ENCODE measurements at regions of chr2 and their contacts with region 1.

Region 1: DNA sequence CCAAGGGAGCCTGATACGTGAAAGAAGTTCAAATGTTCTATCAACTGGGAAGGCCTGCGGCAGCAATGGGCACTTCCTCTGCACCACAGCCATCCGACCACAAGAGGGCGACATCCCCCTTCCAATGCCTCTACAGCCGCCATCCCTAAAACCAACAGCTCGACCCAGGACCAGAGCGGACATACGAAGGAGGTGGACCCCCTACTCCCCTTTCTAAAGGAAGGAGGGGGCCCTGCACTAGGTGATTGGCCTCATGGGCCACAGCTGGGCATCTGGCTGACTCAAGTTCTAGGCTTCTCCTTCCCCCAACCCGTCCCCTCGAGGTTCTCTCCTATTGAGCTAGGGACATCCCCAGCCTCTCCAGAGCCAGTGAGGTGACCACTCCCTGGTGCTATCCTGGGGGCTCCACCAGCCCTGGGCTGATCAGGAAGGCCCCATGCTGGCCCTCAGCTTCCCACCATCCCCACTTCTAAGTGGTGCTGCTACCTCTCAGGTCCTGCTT is 217.2 kb downstream of the TNS1 start:
- DNase-seq: peak; percentile 73 to 90 (median 89)
- H3K4me3 ChIP-seq: no peak overlapping the region
- H3K27ac ChIP-seq: no peak overlapping the region
- H3K4me1 ChIP-seq: peaks cover 1% of the 10 kb centered on the region
- H3K27me3 ChIP-seq: no peaks in the 10 kb centered on the region
- CTCF ChIP-seq: peak; percentile 90 to 95 (median 94)
- EP300 ChIP-seq: no peak
- POLR2A ChIP-seq: peak; percentile 31

Region 2: GRCh38 chr2:217478831-217479455 is 306.7 kb before region 1 on chr2:
- intact Hi-C with region 1: no loop called
- DNase-seq: no peak
- H3K4me3 ChIP-seq: no peak overlapping the region
- H3K27ac ChIP-seq: no peak overlapping the region
- H3K4me1 ChIP-seq: peaks cover 3% of the 10 kb centered on the region
- H3K27me3 ChIP-seq: no peaks in the 10 kb centered on the region
- CTCF ChIP-seq: no peak
- EP300 ChIP-seq: no peak
- POLR2A ChIP-seq: no peak

Region 3: GRCh38 chr2:217662984-217663602 is 122.5 kb before region 1 on chr2:
- intact Hi-C with region 1: no loop called
- DNase-seq: no peak
- H3K4me3 ChIP-seq: no peak overlapping the region
- H3K27ac ChIP-seq: no peak overlapping the region
- H3K4me1 ChIP-seq: peaks cover 2% of the 10 kb centered on the region
- H3K27me3 ChIP-seq: no peaks in the 10 kb centered on the region
- CTCF ChIP-seq: no peak
- EP300 ChIP-seq: no peak
- POLR2A ChIP-seq: no peak

Region 4: GRCh38 chr2:217886720-217887309 is 101.2 kb after region 1 on chr2:
- intact Hi-C with region 1: loop called in 3 of 4 experiments (anchors 5 kb)
- DNase-seq: peak; percentile 68 to 84 (median 81)
- H3K4me3 ChIP-seq: no peak overlapping the region
- H3K27ac ChIP-seq: no peak overlapping the region
- H3K4me1 ChIP-seq: peaks cover 4% of the 10 kb centered on the region
- H3K27me3 ChIP-seq: no peaks in the 10 kb centered on the region
- CTCF ChIP-seq: peak; percentile 70 to 79 (median 75)
- EP300 ChIP-seq: no peak
- POLR2A ChIP-seq: no peak

Region 5: DNA sequence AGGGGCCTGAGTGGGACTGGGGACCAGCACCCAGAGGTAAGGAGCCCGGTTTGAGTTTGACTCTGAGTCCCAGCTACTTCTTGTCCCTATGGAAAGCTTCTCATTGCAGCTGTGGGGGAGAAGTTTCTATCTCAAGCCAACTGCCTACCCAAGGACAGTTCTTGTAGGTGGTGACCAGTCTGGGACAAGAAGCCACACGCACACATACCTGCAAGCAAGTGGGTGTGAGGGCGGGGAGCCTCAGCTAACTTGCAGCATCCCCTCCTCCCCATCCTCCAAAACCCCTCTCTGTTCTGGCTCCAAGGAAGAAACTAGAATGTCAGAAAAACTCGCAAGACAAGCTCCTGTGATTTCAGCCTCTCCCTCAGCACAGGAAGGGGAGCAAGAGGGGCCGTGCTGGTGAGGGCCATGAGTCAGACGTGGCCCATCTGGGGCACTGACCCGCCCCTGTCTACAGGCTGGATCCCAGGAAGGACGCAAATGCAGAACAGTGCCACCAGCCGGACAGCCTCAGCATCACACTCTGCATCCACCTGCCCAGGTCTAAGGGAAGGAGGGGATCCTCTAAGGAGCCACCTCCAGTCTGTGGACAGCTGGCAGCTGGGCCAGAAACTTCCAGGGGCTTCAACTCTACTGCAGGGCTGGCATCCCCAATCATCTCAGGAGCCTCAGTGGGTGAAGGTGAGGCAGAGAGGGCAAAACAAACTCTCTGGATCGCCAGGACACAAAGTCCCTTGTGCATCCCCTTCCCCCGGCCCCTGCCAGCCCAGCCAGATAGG is 113.8 kb after region 1 on chr2:
- intact Hi-C with region 1: no loop called
- DNase-seq: peak; percentile 69 to 84 (median 73)
- H3K4me3 ChIP-seq: no peak overlapping the region
- H3K27ac ChIP-seq: peak overlapping the region in 1 of 2 donors; percentile 66
- H3K4me1 ChIP-seq: peaks cover 53% of the 10 kb centered on the region
- H3K27me3 ChIP-seq: no peaks in the 10 kb centered on the region
- CTCF ChIP-seq: peak; percentile 28 to 63 (median 54)
- EP300 ChIP-seq: no peak
- POLR2A ChIP-seq: peak; percentile 8

Region 6: DNA sequence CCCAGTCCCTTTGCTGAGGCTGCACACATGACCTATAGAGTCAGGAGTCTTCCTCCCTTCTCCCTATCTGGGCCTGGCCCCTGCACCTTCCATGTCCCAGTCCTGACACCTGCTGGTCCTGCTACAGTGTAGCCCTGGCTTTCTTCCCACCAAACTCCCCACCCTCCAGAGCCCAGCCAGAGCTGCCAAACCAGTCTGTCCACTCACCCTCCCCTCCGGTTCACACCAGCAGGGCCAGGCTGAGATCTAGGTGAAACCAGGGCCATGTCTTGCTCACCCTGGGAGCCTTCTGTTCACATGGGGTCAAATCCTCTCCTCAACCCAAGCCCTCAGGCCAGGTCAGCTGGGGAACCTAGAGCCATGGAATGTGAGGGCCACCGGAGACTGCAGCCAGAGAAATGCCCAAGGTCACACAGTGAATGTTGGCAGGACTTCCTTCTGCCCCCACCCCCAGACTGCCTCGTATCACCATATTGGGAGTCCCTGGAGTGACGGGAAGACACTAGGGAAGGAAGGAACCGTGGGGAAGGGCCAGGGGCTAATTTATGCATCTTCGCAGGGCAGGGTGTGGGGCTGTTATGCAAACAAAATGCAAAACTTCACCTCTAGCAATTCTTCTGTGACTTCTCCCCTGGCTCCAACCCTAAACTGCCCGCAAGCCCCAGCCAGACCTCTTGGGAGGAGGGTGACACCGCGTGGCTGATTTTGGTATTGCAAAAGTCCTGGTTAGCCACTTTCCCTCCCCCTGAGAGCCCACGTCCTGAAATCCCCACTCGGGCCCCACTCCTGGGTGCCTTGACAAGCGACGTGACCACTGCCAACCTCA is 202.6 kb after region 1 on chr2:
- intact Hi-C with region 1: loop called (anchors 2 to 5 kb)
- DNase-seq: peak; percentile 84 to 92 (median 91)
- H3K4me3 ChIP-seq: no peak overlapping the region
- H3K27ac ChIP-seq: peak overlapping the region in 1 of 2 donors; percentile 32
- H3K4me1 ChIP-seq: peaks cover 12% of the 10 kb centered on the region
- H3K27me3 ChIP-seq: no peaks in the 10 kb centered on the region
- CTCF ChIP-seq: peak; percentile 84 to 92 (median 91)
- EP300 ChIP-seq: no peak
- POLR2A ChIP-seq: no peak

Region 7: DNA sequence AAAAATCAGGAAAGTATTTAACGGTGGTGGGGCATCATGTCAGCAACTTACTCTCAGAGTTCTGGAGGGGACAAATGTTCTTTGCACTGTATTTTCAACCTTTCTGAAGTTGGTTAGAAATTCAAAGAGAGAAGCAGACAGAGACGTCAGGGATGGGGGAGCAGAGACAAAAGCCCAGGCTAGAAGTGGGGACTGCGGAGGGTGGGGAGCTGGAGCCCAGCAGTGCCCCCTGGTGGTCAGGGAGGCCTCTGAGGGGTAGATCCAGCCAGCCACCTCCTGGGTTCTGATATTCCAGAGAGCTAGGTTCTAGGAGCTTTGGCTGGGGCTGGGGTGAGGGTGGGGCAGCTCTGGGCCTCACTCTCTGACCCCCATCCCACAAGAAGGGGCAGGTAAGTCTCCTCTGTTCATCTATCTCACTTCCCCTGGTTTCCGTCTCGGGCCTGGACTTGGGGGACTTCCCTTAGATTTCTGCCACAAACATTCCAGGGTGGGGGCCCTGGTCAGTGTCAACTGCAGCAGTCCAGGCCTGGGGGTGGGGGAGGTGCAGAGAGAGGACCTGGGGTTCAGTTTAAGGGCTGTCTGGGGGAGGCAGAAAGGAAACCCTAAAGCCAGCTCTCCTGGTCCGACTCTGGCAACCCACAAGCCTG is 208.3 kb after region 1 on chr2:
- intact Hi-C with region 1: loop called (anchors 2 to 5 kb)
- DNase-seq: peak; percentile 67 to 85 (median 80)
- H3K4me3 ChIP-seq: no peak overlapping the region
- H3K27ac ChIP-seq: peak overlapping the region; percentile 54 to 93
- H3K4me1 ChIP-seq: peaks cover 37% of the 10 kb centered on the region
- H3K27me3 ChIP-seq: no peaks in the 10 kb centered on the region
- CTCF ChIP-seq: peak; percentile 55 to 58 (median 55)
- EP300 ChIP-seq: no peak
- POLR2A ChIP-seq: no peak

Region 8: DNA sequence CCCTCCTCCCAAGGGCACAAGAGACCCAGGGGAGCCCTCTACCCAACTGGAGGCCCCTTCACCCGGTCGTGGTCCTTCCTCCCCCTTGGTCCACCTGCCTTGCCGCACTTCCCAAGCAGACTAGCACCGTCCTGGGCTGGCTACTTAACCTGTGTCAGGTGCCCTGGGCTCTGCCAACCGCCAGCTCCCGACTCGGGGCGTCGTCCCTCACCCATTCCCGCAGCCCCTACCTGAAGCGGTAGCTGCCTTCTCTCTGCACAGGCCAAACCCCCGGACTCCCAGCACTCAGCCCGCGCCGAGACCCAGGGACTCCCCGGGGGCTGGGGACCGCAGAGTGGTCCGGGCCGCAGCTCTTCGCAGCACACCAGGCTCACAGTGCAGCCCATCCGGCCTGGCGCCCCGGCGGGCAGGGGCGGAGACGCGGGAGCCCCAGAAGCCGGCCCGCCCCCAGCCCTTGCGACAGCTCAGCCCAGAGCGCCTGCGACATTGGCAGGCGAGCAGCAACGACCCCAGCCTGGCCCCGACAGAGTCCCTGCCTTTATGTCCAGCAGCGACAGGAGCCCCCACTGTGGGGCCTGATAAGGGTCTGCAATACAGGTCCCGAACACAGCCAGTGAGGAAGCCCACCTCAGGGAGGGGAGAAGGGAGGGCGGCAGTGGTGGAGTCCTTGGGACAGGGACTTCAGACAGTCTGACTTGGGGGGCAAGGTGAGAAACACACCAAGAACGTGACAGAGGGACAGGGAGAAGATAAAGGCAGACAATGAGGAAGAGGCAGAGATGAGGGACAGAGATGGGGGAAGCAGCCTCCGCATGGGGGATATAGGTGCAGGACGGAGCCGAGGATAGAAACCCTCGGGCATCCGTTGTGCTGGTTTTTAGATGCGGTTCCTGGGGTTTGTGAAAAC is 248.2 kb after region 1 on chr2:
- intact Hi-C with region 1: loop called (anchors 1 to 10 kb)
- DNase-seq: peak in 1 of 5 donors; percentile 35
- H3K4me3 ChIP-seq: no peak overlapping the region
- H3K27ac ChIP-seq: no peak overlapping the region
- H3K4me1 ChIP-seq: no peaks in the 10 kb centered on the region
- H3K27me3 ChIP-seq: no peaks in the 10 kb centered on the region
- CTCF ChIP-seq: no peak
- EP300 ChIP-seq: no peak
- POLR2A ChIP-seq: no peak

Region 9: GRCh38 chr2:218063486-218063885 is 277.9 kb after region 1 on chr2:
- intact Hi-C with region 1: loop called in 3 of 4 experiments (anchors 2 to 10 kb)
- DNase-seq: no peak
- H3K4me3 ChIP-seq: no peak overlapping the region
- H3K27ac ChIP-seq: no peak overlapping the region
- H3K4me1 ChIP-seq: no peaks in the 10 kb centered on the region
- H3K27me3 ChIP-seq: no peaks in the 10 kb centered on the region
- CTCF ChIP-seq: no peak
- EP300 ChIP-seq: no peak
- POLR2A ChIP-seq: no peak

Region 10: DNA sequence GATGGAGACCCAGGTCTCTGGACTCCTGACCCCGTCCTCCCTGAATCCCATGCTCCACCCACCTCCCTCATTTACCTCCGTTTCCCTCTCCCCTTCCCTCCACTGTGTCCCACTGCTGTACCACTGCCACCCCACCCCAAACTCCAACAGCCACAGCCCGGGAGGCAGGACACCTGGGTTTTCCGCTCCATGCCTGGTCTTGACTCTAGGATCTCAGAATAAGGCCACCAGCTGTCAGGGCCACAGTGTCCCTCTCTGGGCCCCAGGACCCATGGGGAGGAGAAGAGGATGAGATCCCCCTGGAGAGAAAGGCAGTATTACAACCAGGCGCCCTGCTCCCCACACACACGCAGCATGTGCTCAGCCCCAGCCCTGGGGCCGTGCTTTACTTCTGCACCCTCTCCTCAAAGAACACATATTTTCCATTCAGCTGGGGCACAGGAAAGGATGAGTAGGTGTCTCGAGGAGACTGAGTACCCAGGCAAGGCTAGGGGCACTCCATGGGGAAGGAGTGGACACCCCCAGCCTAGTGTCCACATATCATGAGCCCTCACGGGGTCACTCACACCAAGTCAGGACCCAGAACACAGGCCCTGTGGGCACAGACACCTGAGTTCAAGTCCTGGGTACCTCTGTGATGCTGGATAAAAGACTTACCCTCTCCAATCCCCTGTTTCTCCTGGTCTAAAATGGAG is 284.2 kb after region 1 on chr2:
- intact Hi-C with region 1: loop called in 3 of 4 experiments (anchors 2 to 10 kb)
- DNase-seq: no peak
- H3K4me3 ChIP-seq: no peak overlapping the region
- H3K27ac ChIP-seq: no peak overlapping the region
- H3K4me1 ChIP-seq: peaks cover 2% of the 10 kb centered on the region
- H3K27me3 ChIP-seq: no peaks in the 10 kb centered on the region
- CTCF ChIP-seq: no peak
- EP300 ChIP-seq: no peak
- POLR2A ChIP-seq: no peak

Region 11: DNA sequence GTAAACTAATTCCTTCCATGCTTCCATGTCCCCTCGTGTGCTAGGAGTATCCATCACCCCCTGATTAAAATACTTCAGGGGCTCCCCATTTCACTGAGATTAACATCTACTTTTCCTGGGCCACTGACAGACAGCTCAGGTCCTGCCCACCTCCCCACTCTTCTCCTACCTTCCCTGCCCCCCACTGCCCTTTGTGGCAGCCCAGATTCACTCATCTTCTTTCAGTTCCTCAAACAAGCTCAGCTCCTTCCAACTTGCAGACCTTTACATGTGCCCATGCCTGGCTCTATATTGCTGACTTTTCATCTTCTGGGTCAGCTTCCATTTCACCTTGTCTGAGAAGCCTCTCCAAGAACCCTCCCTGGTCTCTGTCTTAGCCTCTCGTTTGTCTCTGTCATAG is 295.5 kb after region 1 on chr2:
- intact Hi-C with region 1: no loop called
- DNase-seq: no peak
- H3K4me3 ChIP-seq: no peak overlapping the region
- H3K27ac ChIP-seq: no peak overlapping the region
- H3K4me1 ChIP-seq: no peaks in the 10 kb centered on the region
- H3K27me3 ChIP-seq: no peaks in the 10 kb centered on the region
- CTCF ChIP-seq: no peak
- EP300 ChIP-seq: no peak
- POLR2A ChIP-seq: no peak